ENCODE measurements at regions of chr18 and their contacts with region 1.

Region 1: DNA sequence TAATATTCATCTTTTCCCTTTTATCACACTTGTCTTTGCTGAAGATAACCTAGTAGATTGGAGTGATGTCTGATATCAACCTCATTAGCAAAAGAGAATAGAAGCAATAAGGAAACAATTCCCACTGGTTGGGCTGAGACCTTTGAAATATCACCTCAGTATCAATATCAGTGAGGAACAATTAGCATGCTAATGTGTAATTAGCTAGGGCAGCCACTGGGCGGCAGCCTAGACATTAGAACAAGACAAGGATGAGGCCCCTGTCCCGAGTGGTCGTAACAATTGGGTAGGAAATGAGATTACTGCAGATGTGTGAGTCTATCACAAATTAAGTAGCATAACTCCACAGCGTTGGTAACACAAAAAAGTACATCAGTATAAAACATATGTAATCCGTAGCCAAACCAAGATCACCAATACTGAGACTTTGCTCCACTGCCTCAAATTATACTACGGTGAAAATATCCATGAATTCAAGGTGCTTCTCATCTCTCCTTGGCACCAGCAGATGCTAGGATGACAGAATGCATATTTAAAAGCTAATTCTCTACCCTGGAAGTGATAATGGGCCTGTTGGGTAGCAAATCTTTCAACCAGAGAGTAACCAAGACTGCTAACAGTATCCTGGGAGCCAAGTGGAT is 99.1 kb downstream of the ALPK2 start:
- DNase-seq: no peak
- H3K4me3 ChIP-seq: no peak overlapping the region
- CTCF ChIP-seq: peak; percentile 56

Region 2: GRCh38 chr18:58505181-58505580 is 24.7 kb before region 1 on chr18:
- CTCF ChIA-PET with region 1: no interaction called
- POLR2A ChIA-PET with region 1: no interaction called
- DNase-seq: no peak
- H3K4me3 ChIP-seq: no peak overlapping the region
- CTCF ChIP-seq: no peak

Region 3: DNA sequence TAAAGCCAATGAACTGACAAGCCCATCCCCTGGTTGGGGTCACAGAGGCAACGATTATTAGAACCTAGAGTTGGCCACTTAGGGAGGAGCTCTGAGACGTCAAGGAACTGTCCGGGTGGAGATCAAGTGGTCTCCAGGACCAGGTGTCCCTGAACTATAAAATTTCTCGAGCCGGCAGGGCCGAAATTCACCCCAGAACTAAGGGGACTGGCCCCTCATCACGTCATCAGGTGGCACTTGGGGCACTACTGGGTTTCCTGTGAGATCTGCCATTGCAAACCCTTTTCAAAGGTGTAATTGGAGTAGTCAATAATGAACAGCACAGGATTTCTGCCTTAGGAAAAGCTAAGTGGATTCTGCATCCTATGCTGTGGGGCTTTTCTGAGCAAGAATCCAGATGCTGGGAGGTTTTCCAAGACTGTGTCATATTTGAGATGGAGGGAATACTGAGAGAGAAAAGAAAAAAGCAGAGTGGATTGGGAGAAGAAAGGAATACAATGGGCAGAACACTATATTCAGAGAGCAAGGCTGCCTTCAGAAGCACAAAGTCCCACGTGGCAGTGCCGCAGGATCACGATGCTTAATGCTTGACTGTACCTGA is 14.6 kb before region 1 on chr18:
- CTCF ChIA-PET with region 1: interaction called, 34 read pairs
- POLR2A ChIA-PET with region 1: no interaction called
- DNase-seq: no peak
- H3K4me3 ChIP-seq: no peak overlapping the region
- CTCF ChIP-seq: no peak

Region 4: GRCh38 chr18:58541789-58542425 is 12.1 kb after region 1 on chr18:
- CTCF ChIA-PET with region 1: interaction called, 77 read pairs
- POLR2A ChIA-PET with region 1: interaction called, 4 read pairs
- DNase-seq: peak; percentile 97
- H3K4me3 ChIP-seq: no peak overlapping the region
- CTCF ChIP-seq: no peak

Region 5: DNA sequence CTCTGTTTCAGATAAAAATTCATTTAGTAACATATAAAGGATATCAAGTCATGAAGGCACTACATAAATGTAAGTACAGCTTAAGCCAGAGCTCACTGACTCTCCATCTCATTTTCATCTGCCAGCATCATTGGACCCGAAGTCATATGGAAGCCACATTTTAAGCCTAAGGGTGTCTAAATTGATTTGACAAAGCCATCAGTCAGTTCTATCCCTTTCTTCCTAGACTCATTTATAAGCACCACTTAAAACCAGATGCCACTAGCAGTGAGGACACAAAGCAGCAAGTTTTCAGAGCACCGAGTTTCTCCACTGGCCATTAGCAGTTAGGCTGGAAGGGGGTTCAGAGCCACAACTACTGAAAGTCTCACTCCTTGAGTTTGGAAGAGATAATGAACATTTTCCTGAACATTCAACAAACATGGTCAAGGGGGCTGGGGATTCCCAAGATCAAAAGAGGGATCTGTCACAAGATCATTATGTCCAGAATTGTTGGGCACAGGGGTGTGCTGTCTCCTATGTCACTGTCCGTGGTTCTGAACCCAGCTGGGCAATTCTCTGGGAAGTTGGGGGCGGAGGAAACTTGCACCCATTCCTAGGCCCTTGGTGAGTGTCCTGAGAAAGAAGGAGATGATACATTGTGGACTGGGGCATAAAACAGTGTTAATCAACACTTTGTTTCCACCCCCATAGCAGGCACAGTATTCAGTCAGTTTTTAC is 987.8 kb after region 1 on chr18:
- CTCF ChIA-PET with region 1: no interaction called
- POLR2A ChIA-PET with region 1: no interaction called
- DNase-seq: no peak
- H3K4me3 ChIP-seq: no peak overlapping the region
- CTCF ChIP-seq: no peak

Measured in AG04449 (cell line).